ENCODE measurements at regions of chr13 and their contacts with region 1.

Region 1: DNA sequence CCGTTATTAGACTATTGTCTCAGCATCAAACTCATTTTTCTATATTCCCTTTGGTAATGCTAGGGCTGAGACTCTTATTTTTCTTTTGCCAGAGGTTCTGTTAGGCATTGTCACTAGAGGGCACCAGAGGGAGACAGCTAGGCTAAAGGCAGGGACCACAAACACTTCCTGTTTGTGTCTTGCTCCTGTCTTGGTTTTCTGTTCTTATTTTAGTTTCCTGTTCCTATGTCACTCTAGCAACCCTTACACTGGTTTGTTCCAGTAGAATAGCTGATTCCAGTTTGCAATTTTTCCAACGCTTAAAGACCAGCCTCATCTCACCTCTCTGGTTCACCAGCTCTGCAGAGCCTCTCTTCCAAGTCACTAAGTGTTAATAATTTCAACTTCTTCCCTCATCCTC is 772.0 kb downstream of the DIAPH3 start:
- DNase-seq: peak; percentile 62
- H3K4me3 ChIP-seq: no peak overlapping the region
- H3K27ac ChIP-seq: no peak overlapping the region
- H3K4me1 ChIP-seq: no peaks in the 10 kb centered on the region
- H3K27me3 ChIP-seq: no peaks in the 10 kb centered on the region
- CTCF ChIP-seq: peak; percentile 48 to 61 (median 49)
- POLR2A ChIP-seq: no peak

Region 2: DNA sequence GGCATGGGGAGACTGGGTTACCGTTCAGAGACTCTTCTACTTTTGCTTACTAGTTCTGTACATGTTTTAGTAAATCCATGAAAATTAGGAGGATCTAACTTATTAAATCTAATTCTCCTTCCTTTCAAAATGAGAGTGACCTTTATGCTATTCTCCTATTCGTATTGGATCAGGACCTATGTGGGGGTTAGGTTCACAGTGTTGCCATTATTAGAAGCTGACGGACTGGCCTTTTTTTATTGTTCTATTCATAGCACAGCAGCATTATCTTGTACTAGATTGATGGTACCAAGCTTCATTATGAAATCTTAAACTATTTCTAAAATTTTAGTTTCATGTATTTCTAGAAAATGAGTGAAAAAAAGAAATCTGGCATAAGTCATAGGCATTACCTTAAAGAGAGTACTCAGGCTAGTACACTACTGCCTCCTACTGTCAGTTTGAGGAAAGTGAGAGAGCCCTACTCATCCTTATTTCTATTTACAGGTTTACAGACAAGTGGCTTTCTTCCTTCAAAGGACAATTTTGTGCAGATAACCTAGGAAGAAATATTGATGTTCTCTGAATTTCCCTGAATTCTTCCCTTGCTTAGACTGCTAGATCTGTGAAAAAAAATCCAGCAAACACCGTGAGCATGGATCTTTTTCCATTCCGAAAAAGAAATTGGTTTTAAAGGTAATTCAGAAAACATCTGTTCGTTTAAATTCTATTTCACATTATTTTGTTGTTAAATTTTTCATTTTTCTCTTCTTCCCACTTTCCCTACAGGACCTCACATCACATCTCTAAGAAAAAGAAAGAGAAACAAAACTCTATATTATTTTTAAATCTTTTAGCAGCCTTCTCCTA is 286.5 kb after region 1 on chr13:
- intact Hi-C with region 1: loop called (anchors 10 kb)
- DNase-seq: peak; percentile 16
- H3K4me3 ChIP-seq: no peak overlapping the region
- H3K27ac ChIP-seq: no peak overlapping the region
- H3K4me1 ChIP-seq: no peaks in the 10 kb centered on the region
- H3K27me3 ChIP-seq: no peaks in the 10 kb centered on the region
- CTCF ChIP-seq: peak; percentile 45 to 52 (median 50)
- POLR2A ChIP-seq: no peak